ENCODE measurements at regions of chr14 and their contacts with region 1.

Region 1: DNA sequence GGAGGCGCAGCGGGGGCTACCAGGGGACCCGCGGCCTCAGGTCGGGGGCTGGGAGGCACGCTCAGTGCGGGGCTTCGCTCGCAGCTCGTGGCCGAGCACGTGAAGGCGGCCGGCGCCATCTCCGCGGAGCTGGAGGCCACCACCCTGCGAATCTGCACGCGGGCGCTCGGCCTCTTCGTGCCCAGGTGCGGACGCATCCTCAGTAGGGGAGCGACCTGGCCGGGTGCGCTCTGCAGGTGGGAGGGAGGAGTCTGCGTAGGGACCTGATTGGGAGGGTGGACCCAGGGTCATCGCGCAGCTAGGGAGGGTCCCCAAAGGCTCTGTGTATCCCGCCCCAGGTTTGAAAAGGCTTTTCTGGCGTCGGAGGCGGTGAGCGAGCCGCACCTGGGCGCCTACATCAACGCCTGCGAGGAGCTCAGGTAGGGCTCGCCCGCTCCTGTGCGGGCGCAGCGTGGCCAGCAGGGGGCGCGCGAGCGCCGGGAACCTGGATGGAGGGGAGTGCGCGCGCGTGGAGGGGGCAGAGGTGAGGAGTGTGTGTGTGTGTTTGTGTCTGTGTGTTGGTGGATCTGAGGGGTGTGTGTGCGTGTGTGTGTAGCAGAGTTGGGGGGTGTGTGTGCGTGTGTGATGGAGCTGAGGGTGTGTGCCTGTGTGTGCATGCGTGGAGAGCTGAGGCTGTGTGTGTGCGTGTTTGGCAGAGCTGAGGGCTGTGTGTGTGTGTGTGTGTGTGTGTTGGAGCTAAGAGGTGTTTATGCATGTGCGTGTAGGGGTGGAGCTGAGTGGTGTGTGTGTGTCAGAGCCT is 10.3 kb downstream of the EXOC3L4 start:
- DNase-seq: peak; percentile 69
- H3K4me3 Mint-ChIP-seq: no peak overlapping the region
- H3K27ac Mint-ChIP-seq: no peak overlapping the region
- H3K4me1 Mint-ChIP-seq: peaks cover 7% of the 10 kb centered on the region
- H3K27me3 Mint-ChIP-seq: peaks cover 31% of the 10 kb centered on the region

Region 2: DNA sequence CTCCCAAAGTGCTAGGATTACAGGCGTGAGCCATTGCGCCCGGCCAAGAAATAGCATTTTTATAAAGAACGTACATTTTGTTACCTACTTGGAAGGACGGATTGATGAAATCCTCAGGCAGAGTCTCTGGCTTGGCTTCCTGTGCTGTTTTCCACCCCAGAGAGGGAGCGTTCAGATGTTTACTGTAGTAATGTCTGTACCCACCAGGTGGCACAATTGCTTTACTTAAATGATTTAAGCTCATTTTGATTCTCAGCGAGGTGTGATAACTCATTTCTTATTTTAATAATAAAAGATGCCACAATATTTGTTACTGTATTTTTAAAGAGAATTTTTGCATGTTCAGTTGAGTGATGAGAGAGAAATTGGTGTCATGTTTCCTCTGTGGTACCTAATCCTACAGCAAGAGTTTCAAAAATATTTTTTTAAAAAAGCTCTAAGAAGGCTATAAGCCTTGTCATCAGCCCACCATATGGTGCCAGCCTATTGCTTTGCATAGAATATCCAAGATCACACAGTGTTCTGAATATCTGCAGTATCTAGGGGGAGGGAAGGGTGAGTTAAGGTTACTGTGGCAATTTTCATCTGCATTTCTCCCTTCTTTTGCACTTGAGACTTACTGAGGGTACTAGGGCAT is 410.2 kb before region 1 on chr14:
- CTCF ChIA-PET with region 1: interaction called, 11 read pairs
- POLR2A ChIA-PET with region 1: no interaction called
- DNase-seq: peak; percentile 52
- H3K4me3 Mint-ChIP-seq: no peak overlapping the region
- H3K27ac Mint-ChIP-seq: no peak overlapping the region
- H3K4me1 Mint-ChIP-seq: peaks cover 6% of the 10 kb centered on the region
- H3K27me3 Mint-ChIP-seq: no peaks in the 10 kb centered on the region

Region 3: DNA sequence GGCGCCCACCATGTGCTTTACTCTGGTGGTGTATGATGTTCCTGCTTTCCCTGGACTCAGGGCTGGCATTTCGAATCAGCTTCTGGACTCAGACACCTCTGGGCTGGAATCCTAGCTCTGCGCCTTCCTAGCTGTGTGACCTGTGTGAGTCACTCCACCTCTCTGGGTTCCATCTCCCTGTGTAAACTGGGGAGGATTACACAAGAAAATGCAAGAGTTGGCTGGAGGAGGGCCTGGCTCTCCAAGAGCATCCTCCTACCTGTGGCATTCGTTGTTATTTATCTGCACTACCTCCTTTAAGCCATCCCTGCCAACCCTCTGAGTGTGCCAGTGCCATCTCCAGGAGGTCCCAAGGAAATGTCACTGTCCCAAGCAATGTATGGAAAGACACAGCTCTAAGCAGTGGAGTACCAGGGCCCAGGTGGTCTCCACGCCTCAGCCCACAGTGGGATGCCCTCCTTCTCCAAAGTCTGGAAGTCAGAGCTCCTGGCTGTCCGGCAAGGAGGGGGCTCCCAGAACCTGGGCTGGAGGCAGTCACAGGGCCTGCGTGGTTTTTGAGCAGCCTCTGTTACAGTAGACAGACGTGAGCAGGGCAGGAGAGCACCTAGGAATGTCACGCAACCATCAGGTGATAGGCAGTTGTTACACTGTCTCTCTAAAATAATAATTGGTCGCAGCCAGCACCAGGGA is 11.2 kb after region 1 on chr14:
- CTCF ChIA-PET with region 1: interaction called, 17 read pairs
- POLR2A ChIA-PET with region 1: no interaction called
- DNase-seq: no peak
- H3K4me3 Mint-ChIP-seq: no peak overlapping the region
- H3K27ac Mint-ChIP-seq: no peak overlapping the region
- H3K4me1 Mint-ChIP-seq: peaks cover 11% of the 10 kb centered on the region
- H3K27me3 Mint-ChIP-seq: peaks cover 10% of the 10 kb centered on the region

Region 4: GRCh38 chr14:103277931-103278330 is 173.1 kb after region 1 on chr14:
- CTCF ChIA-PET with region 1: interaction called, 11 read pairs
- POLR2A ChIA-PET with region 1: no interaction called
- DNase-seq: no peak
- H3K4me3 Mint-ChIP-seq: no peak overlapping the region
- H3K27ac Mint-ChIP-seq: no peak overlapping the region
- H3K4me1 Mint-ChIP-seq: peaks cover 8% of the 10 kb centered on the region
- H3K27me3 Mint-ChIP-seq: peaks cover 58% of the 10 kb centered on the region

Region 5: GRCh38 chr14:103391048-103391447 is 286.2 kb after region 1 on chr14:
- CTCF ChIA-PET with region 1: interaction called, 13 read pairs
- POLR2A ChIA-PET with region 1: interaction called, 3 read pairs
- DNase-seq: peak; percentile 48
- H3K4me3 Mint-ChIP-seq: no peak overlapping the region
- H3K27ac Mint-ChIP-seq: no peak overlapping the region
- H3K4me1 Mint-ChIP-seq: peaks cover 47% of the 10 kb centered on the region
- H3K27me3 Mint-ChIP-seq: no peaks in the 10 kb centered on the region

Measured in activated CD4-positive, alpha-beta memory T cell treated with anti-CD3 and anti-CD28 coated beads, Interleukin-2, amount 10 ng/mL, durations not matched to agents 7 days and 5 days (primary cell).